PC-9 (cell line): ENCODE measurements at regions of chr11 and their contacts with region 1.

Region 1: DNA sequence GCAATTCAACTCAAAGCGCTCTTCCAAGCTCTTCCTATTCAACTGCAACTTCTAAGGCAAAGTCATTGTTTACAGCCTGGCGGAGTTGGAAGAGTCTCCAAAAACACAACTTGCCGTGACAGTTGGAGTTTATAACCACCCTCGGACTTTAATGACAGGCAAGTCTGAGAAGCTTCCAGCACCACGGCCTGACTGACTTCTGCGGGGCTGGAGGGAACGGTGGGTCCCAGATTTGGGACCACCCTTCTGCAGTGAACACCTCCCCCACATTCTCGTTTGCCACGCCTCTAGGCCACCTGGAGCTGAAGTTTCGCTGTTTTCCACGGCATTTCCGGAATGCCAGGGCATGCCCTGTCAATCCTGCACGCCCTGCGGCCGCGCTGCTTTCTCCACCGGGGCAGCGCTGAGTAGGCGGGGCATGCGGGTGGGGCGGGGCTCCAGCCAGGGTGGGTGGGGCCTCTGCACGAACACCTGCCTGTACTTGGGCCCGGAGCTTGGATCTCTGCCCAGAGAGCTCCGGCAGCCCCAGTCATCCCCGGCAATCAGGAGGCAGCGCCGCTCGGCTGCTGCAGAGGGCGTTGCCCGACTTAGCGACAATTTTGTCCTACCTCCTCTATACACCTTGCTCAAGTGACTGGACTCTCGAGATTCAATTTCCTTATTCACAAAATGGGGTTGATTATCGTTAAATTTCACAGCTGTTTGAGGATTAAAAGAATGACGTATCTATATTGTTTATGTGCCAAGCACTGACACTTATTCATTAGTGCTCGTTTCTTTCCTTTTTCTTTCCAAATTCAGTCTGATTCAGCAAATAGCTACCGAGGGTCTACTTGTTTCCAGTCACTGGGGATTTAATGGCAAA is 48.7 kb upstream of the BIRC3 start:
- DNase-seq: peak; percentile 93 to 96
- H3K4me3 ChIP-seq: peak overlapping the region; percentile 73
- H3K27ac ChIP-seq: peak overlapping the region; percentile 80
- H3K4me1 ChIP-seq: peaks cover 39% of the 10 kb centered on the region
- H3K27me3 ChIP-seq: no peaks in the 10 kb centered on the region
- CTCF ChIP-seq: peak; percentile 73

Region 2: DNA sequence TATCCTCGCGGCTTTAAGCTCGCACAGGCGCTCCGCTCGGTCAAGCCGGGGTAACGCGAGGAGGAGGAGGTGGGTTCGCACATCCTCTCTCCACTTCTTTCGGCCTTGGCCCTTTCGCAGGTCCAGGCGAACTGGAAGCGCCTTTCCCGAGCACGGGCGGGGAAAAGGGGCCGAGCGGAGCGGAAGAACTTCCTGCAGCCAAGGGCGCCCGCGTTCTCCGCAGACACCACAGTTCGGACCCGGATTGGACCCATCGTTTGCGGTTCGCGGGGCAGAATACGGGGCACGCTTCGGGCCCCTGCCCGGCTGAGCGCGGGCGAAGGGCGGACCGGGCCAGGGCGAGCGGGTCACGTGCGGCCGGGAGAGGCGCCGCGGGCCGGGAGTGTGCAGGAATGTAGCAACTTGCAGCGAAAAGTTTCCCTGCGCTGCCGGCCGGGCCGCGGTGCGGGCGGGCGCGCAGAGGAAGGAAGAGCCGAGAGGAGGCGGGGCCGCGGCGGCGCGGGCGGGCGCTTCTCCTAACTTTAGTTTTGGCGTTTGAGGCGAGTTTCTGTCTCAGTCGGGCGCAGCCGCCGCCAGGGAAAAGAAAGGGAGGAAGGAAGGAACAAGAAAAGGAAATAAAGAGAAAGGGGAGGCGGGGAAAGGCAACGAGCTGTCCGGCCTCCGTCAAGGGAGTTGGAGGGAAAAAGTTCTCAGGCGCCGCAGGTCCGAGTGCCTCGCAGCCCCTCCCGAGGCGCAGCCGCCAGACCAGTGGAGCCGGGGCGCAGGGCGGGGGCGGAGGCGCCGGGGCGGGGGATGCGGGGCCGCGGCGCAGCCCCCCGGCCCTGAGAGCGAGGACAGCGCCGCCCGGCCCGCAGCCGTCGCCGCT is 158.4 kb before region 1 on chr11 and contains the start of gene YAP1:
- CTCF ChIA-PET with region 1: no interaction called
- POLR2A ChIA-PET with region 1: no interaction called
- intact Hi-C with region 1: loop called (anchors 1 kb)
- DNase-seq: peak; percentile 80 to 90
- H3K4me3 ChIP-seq: peak within 1 kb of the TSS; percentile 72
- H3K27ac ChIP-seq: peak within 1 kb of the TSS; percentile 96
- H3K4me1 ChIP-seq: peaks cover 38% of the 10 kb centered on the region
- H3K27me3 ChIP-seq: no peaks in the 10 kb centered on the region
- CTCF ChIP-seq: no peak
- total RNA-seq, gene YAP1: 101 and 111 TPM in 2 replicates

Region 3: DNA sequence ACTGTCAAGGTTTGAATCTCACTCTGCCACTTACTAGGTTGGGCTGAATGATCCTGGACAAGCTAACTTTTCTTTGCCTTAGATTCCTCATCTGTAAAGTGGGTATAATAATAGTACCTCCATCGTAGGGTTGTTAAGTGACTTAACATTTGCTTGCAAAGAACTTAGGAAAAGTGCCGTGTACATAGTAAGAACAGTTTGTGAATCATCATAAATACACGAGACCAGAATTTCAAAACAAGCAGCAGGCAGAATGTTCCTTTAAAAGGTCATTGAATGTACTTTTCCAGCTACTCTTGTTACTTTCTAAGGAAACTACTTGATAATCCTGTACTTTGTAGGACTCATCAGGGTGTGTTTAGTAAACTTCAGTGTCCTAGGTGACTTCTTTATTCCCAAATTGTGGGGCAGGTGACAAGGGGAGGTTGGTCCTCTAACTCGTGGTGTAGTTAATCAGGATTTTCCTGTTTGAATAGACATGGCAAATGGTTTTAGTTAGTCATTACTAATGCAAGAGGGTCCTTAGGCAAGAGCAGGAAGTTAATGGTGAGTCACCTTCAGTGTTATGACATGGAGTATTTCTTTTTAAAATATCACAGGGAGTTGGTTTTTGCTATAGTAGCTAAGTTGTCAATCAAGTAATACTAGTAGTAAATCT is 90.5 kb before region 1 on chr11:
- CTCF ChIA-PET with region 1: no interaction called
- POLR2A ChIA-PET with region 1: interaction called, 4 read pairs
- intact Hi-C with region 1: loop called (anchors 1 kb)
- DNase-seq: peak; percentile 61 to 100
- H3K4me3 ChIP-seq: peak overlapping the region; percentile 10; the same call in 1 of the 2 replicates
- H3K27ac ChIP-seq: peak overlapping the region; percentile 88
- H3K4me1 ChIP-seq: peaks cover 41% of the 10 kb centered on the region
- H3K27me3 ChIP-seq: no peaks in the 10 kb centered on the region
- CTCF ChIP-seq: no peak

Region 4: DNA sequence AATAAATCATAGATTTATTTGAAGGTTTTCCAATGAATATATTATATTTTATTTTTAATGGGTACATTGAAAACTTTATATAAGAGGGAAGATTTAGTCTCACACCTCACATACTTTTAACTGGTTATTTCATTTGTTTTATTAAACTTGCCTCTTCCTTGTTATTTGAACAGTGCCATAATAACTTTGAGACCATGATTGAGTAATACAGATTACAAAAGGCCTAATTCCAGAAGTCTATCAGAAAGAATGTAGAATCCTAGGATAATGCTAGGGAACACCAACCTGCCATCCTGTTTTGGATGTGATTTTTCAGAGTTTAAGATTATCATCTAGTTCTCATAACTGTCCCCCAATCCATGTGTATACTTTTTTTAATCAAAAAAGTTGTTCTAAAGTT is 53.9 kb before region 1 on chr11:
- CTCF ChIA-PET with region 1: no interaction called
- POLR2A ChIA-PET with region 1: no interaction called
- intact Hi-C with region 1: no loop called
- DNase-seq: no peak
- H3K4me3 ChIP-seq: no peak overlapping the region
- H3K27ac ChIP-seq: no peak overlapping the region
- H3K4me1 ChIP-seq: no peaks in the 10 kb centered on the region
- H3K27me3 ChIP-seq: no peaks in the 10 kb centered on the region
- CTCF ChIP-seq: no peak

Region 5: GRCh38 chr11:102244681-102245409 is 23.7 kb before region 1 on chr11:
- CTCF ChIA-PET with region 1: no interaction called
- POLR2A ChIA-PET with region 1: no interaction called
- intact Hi-C with region 1: loop called (anchors 2 kb)
- DNase-seq: peak; percentile 87 to 99
- H3K4me3 ChIP-seq: no peak overlapping the region
- H3K27ac ChIP-seq: peak overlapping the region; percentile 66
- H3K4me1 ChIP-seq: peaks cover 45% of the 10 kb centered on the region
- H3K27me3 ChIP-seq: no peaks in the 10 kb centered on the region
- CTCF ChIP-seq: no peak

Region 6: GRCh38 chr11:102293873-102294601 is 25.5 kb after region 1 on chr11:
- CTCF ChIA-PET with region 1: interaction called, 11 read pairs
- POLR2A ChIA-PET with region 1: no interaction called
- intact Hi-C with region 1: no loop called
- DNase-seq: peak in 1 of 2 experiments; percentile 64
- H3K4me3 ChIP-seq: no peak overlapping the region
- H3K27ac ChIP-seq: no peak overlapping the region
- H3K4me1 ChIP-seq: no peaks in the 10 kb centered on the region
- H3K27me3 ChIP-seq: no peaks in the 10 kb centered on the region
- CTCF ChIP-seq: peak; percentile 81

Region 7: DNA sequence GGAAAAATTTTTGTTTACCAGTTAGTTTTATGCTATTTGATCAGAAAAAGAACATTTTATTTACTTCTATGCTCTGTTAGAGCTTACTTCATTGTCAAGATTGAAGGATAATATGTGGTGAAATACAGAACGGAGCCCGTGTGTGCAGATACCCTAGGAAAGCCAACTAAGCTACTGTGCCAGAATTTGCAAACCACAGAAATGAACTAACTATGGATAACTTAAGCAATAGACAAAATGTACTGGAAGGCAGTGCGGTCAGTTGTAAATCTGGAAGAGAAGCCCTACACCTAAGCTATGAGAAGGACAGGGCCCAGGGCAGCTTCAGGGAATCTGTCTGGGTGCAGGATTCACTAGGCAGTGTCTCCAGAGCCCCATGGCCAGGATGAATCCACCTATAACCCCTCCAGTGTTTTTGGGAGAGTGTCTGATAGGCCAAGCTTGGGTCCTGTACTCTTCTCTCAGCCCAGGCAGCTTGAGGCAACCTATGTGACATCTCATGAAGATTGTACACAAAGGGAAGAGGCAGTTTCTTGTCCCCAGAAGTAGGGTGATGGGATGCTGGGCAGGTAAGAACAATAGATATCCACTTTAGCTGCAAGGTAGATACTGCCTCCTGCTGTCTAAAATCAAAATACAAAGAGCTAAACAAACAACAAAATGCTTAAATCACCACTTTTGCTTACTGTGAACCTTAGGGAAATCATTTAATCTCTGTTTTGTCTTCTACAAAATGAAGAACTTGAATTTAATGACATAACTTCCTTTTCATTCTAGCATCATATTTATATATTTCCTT is 249.9 kb after region 1 on chr11:
- CTCF ChIA-PET with region 1: no interaction called
- POLR2A ChIA-PET with region 1: no interaction called
- intact Hi-C with region 1: no loop called
- DNase-seq: no peak
- H3K4me3 ChIP-seq: no peak overlapping the region
- H3K27ac ChIP-seq: no peak overlapping the region
- H3K4me1 ChIP-seq: no peaks in the 10 kb centered on the region
- H3K27me3 ChIP-seq: no peaks in the 10 kb centered on the region
- CTCF ChIP-seq: no peak